AG04449 (cell line): ENCODE measurements at regions of chr16 and their contacts with region 1.

Region 1: DNA sequence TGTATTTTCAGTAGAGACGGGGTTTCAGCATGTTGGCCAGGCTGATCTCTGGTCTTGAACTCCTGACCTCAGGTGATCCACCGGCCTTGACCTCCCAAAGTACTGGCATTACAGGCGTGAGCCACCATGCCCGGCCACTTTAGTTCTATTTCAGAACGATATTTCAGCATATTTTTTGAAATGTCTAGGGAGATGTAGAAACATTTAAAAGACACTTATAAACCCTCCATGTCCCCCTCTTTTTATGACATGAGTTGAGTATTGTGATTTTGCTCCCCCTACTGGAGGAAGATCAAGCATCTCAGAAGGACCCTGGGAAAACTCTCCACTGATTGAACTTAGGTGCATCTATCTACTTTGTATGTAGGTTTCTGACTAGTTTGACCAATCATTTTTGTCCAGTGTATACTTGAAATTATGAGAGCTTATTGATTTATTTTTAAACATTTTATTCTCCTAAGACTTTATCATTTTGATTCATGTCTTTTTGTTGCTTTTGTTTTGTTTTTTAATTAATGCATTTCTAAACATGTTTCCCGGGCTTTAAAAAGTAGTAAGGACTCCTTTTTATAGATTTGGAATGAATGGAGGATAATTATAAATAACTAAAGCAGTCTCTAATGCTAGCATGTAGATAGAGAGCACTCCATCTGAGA is 105.1 kb downstream of the CHD9 start:
- DNase-seq: no peak
- H3K4me3 ChIP-seq: no peak overlapping the region
- CTCF ChIP-seq: peak; percentile 54

Region 2: GRCh38 chr16:53142823-53143568 is 16.9 kb before region 1 on chr16:
- CTCF ChIA-PET with region 1: interaction called, 14 read pairs
- POLR2A ChIA-PET with region 1: interaction called, 3 read pairs
- DNase-seq: no peak
- H3K4me3 ChIP-seq: no peak overlapping the region
- CTCF ChIP-seq: no peak